HepG2 (cell line): ENCODE measurements at regions of chr3 and their contacts with region 1.

Region 1: DNA sequence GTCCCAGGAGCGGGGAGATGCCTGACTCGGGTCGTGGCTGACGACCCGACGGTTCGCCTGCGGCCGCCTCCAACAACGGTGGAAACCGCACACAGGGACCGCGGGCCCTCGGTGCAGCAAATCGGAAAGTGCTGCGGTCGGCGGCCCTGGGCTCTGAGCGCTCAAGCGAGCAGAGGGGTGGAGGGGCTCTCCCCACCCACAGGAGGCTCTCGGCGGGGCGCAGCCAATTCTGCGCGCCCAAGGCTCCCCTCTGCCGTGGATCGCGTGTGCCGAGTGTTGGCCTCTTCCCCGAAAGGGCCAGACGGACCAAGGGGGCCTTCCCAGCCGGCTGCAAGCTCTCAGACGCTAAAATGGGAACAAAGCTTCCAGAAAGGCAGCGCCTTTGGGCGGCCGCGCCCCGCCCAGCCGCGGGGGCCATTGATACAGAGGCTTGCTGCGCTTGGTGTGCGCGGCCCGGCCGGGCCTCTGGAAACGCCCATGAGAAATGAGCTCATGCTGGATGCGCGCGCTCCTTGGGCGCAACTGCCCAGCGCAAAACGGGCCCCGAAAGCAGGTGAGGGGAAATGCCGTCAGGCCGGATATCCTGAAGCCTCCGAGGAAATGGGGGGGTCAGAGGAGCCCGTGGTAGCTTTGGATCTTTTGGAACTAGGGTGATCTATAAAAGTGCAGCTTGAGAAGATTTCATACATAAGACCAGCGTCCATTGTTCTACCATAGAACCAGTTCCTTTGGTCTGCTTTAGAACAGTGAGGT is 1.2 kb upstream of the GSK3B start:
- DNase-seq: peak; percentile 87
- ATAC-seq: peak; percentile 78
- H3K4me3 ChIP-seq: peak overlapping the region; percentile 82 to 88 (median 88)
- H3K27ac ChIP-seq: peak overlapping the region; percentile 100
- H3K4me1 ChIP-seq: peaks cover 15% of the 10 kb centered on the region
- H3K27me3 ChIP-seq: no peaks in the 10 kb centered on the region; a peak in 1 of 5 replicates
- CTCF ChIP-seq: no peak; the same call in none of the 2 replicates
- EP300 ChIP-seq: no peak
- POLR2A ChIP-seq: peak; percentile 95 to 98
- RAD21 ChIP-seq: peak; percentile 65

Region 2: GRCh38 chr3:119498186-119498987 is 597.0 kb before region 1 on chr3 and contains the start of gene TIMMDC1:
- CTCF ChIA-PET with region 1: no interaction called
- POLR2A ChIA-PET with region 1: interaction called, 13 read pairs
- in situ Hi-C with region 1: no loop called
- intact Hi-C with region 1: no loop called
- DNase-seq: peak; percentile 96
- ATAC-seq: peak; percentile 99
- H3K4me3 ChIP-seq: peak within 1 kb of the TSS; percentile 63 to 97 (median 96)
- H3K27ac ChIP-seq: peak within 1 kb of the TSS; percentile 97
- H3K4me1 ChIP-seq: peaks cover 31% of the 10 kb centered on the region
- H3K27me3 ChIP-seq: no peaks in the 10 kb centered on the region; a peak in 1 of 5 replicates
- CTCF ChIP-seq: no peak
- EP300 ChIP-seq: 0 out of 4 replicates have a peak, but pooled peaks of 1 of the 2 experiments have one; percentile 38
- POLR2A ChIP-seq: peak; percentile 94 to 98
- RAD21 ChIP-seq: peak; percentile 37
- total RNA-seq, gene TIMMDC1: 77.8 and 78.2 TPM in 2 replicates

Region 3: GRCh38 chr3:119891944-119892721 is 203.3 kb before region 1 on chr3:
- CTCF ChIA-PET with region 1: no interaction called
- POLR2A ChIA-PET with region 1: interaction called, 3 read pairs
- in situ Hi-C with region 1: no loop called
- intact Hi-C with region 1: loop called (anchors 5 kb)
- DNase-seq: peak; percentile 55
- ATAC-seq: peak; percentile 73
- H3K4me3 ChIP-seq: no peak overlapping the region
- H3K27ac ChIP-seq: no peak overlapping the region
- H3K4me1 ChIP-seq: no peaks in the 10 kb centered on the region
- H3K27me3 ChIP-seq: no peaks in the 10 kb centered on the region
- CTCF ChIP-seq: peak; percentile 67
- EP300 ChIP-seq: no peak
- POLR2A ChIP-seq: no peak
- RAD21 ChIP-seq: peak; percentile 55; the same call in 1 of the 2 replicates

Region 4: GRCh38 chr3:120081719-120082118 is 13.7 kb before region 1 on chr3:
- CTCF ChIA-PET with region 1: no interaction called
- POLR2A ChIA-PET with region 1: interaction called, 15 read pairs
- in situ Hi-C with region 1: no loop called
- intact Hi-C with region 1: no loop called
- DNase-seq: no peak
- ATAC-seq: no peak
- H3K4me3 ChIP-seq: no peak overlapping the region
- H3K27ac ChIP-seq: no peak overlapping the region
- H3K4me1 ChIP-seq: peaks cover 9% of the 10 kb centered on the region
- H3K27me3 ChIP-seq: no peaks in the 10 kb centered on the region; a peak in 1 of 5 replicates
- CTCF ChIP-seq: no peak
- EP300 ChIP-seq: no peak
- POLR2A ChIP-seq: no peak
- RAD21 ChIP-seq: no peak

Region 5: GRCh38 chr3:120147072-120147871 is 51.9 kb after region 1 on chr3:
- CTCF ChIA-PET with region 1: no interaction called
- POLR2A ChIA-PET with region 1: interaction called, 65 read pairs
- in situ Hi-C with region 1: no loop called
- intact Hi-C with region 1: no loop called
- DNase-seq: peak; percentile 39
- ATAC-seq: peak; percentile 84
- H3K4me3 ChIP-seq: peak overlapping the region; percentile 18 to 42 (median 37)
- H3K27ac ChIP-seq: no peak overlapping the region
- H3K4me1 ChIP-seq: peaks cover 72% of the 10 kb centered on the region
- H3K27me3 ChIP-seq: no peaks in the 10 kb centered on the region; a peak in 1 of 5 replicates
- CTCF ChIP-seq: peak; percentile 68
- EP300 ChIP-seq: peak in 1 of 2 experiments; percentile 53; a peak in 1 of 4 replicates
- POLR2A ChIP-seq: no peak
- RAD21 ChIP-seq: peak; percentile 47; the same call in 1 of the 2 replicates

Region 6: DNA sequence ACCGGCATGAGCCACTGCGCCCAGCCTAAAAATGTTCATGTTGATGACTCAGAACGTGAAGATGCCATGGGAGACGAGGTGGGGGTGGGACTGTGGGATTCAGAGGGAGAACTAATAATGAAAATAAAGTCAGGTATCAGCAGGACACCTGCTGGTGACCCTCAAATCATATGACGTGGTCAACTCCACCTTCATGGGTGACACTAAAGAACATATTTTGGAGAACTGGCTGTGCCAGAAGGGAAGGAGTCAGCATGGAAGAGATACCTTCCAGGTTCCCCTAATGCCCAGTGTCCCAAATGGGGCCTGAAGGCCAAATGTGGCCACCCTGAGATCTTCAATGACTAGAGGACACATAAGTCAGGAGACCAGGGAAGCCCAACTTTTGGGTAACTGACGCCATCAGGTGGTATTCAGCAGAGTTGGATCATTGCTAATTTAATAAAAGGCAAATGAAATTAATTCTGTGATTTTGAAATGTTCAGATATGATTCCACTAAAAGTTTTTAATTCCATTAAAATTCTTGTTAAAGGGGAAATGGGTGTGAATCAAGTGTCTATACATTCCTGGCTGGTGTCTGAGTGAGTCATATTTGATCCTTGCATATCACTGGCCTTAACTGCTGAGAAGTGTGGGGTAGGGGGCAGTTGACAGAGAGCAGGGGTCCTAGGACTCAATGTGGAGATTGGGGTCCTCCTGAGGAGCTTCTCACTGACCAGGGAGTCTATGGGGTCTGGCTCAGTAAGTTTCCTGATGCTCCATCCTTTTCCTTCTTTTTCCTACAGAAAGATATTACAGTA is 87.5 kb after region 1 on chr3:
- CTCF ChIA-PET with region 1: no interaction called
- POLR2A ChIA-PET with region 1: interaction called, 6 read pairs
- in situ Hi-C with region 1: no loop called
- intact Hi-C with region 1: loop called (anchors 5 kb)
- DNase-seq: no peak
- ATAC-seq: no peak
- H3K4me3 ChIP-seq: no peak overlapping the region
- H3K27ac ChIP-seq: no peak overlapping the region
- H3K4me1 ChIP-seq: peaks cover 25% of the 10 kb centered on the region
- H3K27me3 ChIP-seq: no peaks in the 10 kb centered on the region
- CTCF ChIP-seq: peak; percentile 49
- EP300 ChIP-seq: no peak
- POLR2A ChIP-seq: no peak
- RAD21 ChIP-seq: no peak